Endothelial cell of umbilical vein (primary cell): ENCODE measurements at regions of chr7 and their contacts with region 1.

Region 1: DNA sequence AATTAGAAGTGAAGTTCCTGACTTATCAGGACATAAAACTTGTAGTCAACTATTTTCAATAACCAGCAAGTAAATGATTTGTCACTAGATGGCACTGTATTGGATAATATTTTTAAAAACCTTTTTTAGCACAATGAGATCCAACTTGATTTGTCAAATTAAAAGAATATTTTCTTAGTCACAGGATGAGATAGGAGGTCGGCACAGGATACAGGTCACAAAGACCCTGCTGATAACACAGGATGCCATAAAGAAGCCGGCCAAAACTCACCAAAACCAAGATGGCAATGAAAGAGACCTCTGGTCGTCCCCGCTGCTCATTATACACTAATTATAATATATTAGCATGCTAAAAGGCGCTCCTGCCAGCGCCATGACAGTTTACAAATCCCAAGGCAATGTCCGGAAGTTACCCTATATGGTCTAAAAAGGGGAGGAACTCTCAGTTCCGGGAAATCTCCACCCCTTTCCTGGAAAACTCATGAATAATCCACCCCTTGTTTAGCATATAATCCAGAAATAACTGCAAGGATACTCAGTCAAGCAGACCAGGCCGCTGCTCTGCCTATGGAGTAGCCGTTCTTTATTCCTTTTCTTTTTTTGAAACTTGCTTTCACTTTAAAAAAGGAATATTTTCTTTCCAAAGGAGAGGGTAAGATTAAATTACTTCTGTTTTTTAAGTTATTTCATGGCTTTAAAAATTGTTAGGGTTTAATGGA is 255.7 kb upstream of the MKLN1 start:
- DNase-seq: peak; percentile 96
- H3K4me3 ChIP-seq: peak overlapping the region in 1 of 3 experiments; percentile 51
- H3K27ac ChIP-seq: peak overlapping the region; percentile 88
- H3K4me1 ChIP-seq: peaks cover 17% of the 10 kb centered on the region
- H3K27me3 ChIP-seq: no peaks in the 10 kb centered on the region
- CTCF ChIP-seq: peak; percentile 11 to 16
- POLR2A ChIP-seq: no peak

Region 2: DNA sequence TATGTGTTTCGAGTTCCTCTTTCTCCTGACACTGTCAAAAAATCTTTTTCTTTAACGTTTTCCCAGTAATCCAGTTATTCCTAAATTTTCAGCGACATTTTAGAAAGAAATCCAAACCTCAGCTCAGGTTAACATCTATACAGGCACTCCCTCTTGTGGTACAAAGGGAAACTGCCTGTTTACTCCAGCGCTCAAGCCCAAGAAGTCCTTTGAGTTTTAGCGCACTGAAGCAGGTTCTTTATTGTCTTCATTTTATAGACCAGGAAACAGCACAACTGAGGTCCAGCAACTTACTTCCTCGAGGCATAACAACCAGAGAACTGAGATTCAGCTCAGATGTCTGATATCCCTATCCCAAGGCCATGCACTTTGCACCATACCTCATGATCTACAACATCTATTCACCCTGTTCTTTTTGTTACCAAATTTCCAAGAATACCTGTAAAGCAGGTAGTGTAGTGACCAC is 31.4 kb before region 1 on chr7:
- CTCF ChIA-PET with region 1: interaction called, 10 read pairs
- POLR2A ChIA-PET with region 1: no interaction called
- dilution Hi-C with region 1: no loop called
- intact Hi-C with region 1: no loop called
- DNase-seq: peak; percentile 82
- H3K4me3 ChIP-seq: no peak overlapping the region
- H3K27ac ChIP-seq: no peak overlapping the region
- H3K4me1 ChIP-seq: peaks cover 9% of the 10 kb centered on the region
- H3K27me3 ChIP-seq: no peaks in the 10 kb centered on the region
- CTCF ChIP-seq: peak; percentile 81 to 83
- POLR2A ChIP-seq: no peak

Region 3: DNA sequence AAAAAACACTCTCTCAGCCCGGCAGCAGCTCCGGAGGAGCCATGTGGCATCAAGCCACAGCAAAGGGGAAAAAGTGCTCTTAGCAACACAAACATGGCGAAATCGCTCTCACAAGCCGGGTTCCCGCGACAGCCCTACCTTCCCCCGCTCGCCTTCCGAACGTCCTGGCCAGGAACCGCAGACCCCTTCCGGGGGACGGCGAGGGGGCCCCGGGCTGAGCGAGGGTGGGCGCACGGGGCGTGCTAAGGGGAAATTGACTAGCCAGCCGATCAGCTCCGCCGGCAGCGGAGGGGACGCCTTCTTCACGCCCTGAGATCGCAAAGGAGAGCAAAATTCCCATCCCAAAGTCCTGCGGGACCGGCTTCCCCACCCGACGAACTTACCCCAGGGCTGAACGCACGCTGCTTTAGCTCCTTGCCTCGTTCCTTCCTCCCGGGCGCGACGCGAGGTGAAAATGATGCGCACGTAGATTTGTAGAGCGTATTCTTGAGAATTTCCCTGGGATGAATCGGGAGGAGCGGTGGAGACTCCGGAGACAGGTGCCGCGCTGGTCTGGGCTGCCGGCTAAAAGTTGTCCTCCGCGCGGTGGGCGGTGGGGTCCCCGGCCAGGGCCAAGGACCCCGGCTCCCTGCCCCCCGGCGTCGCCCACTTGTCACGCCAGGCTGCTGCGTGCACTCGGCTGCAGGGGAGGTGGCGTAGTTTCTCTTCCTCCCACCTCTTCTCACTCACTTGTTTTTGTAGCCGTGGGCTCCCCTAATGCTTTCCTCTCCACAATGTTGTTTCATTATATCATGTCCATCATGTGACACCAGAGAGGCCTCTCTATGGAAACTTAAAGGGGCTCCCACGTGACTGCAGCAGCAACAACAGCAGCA is 35.6 kb after region 1 on chr7:
- CTCF ChIA-PET with region 1: interaction called, 10 read pairs
- POLR2A ChIA-PET with region 1: interaction called, 6 read pairs
- dilution Hi-C with region 1: no loop called
- intact Hi-C with region 1: loop called (anchors 1 kb)
- DNase-seq: peak; percentile 92
- H3K4me3 ChIP-seq: peak overlapping the region; percentile 61 to 79 (median 63)
- H3K27ac ChIP-seq: peak overlapping the region; percentile 98
- H3K4me1 ChIP-seq: peaks cover 41% of the 10 kb centered on the region
- H3K27me3 ChIP-seq: no peaks in the 10 kb centered on the region
- CTCF ChIP-seq: no peak
- POLR2A ChIP-seq: no peak

Region 4: GRCh38 chr7:131244259-131244852 is 172.4 kb after region 1 on chr7:
- CTCF ChIA-PET with region 1: no interaction called
- POLR2A ChIA-PET with region 1: no interaction called
- dilution Hi-C with region 1: no loop called
- intact Hi-C with region 1: loop called (anchors 2 kb)
- DNase-seq: peak; percentile 73
- H3K4me3 ChIP-seq: no peak overlapping the region
- H3K27ac ChIP-seq: no peak overlapping the region
- H3K4me1 ChIP-seq: peaks cover 8% of the 10 kb centered on the region
- H3K27me3 ChIP-seq: no peaks in the 10 kb centered on the region
- CTCF ChIP-seq: no peak
- POLR2A ChIP-seq: no peak

Region 5: GRCh38 chr7:131327626-131328376 is 255.9 kb after region 1 on chr7 and contains the start of gene MKLN1:
- CTCF ChIA-PET with region 1: interaction called, 3 read pairs
- POLR2A ChIA-PET with region 1: no interaction called
- dilution Hi-C with region 1: no loop called
- intact Hi-C with region 1: loop called (anchors 2 kb)
- DNase-seq: peak; percentile 90
- H3K4me3 ChIP-seq: peak within 1 kb of the TSS; percentile 69 to 99 (median 87)
- H3K27ac ChIP-seq: peak within 1 kb of the TSS; percentile 98
- H3K4me1 ChIP-seq: peaks cover 17% of the 10 kb centered on the region
- H3K27me3 ChIP-seq: no peaks in the 10 kb centered on the region
- CTCF ChIP-seq: no peak
- POLR2A ChIP-seq: peak; percentile 81
- total RNA-seq, gene MKLN1: 31.7 and 32.1 TPM in 2 replicates

Region 6: GRCh38 chr7:131480384-131481315 is 408.7 kb after region 1 on chr7:
- CTCF ChIA-PET with region 1: no interaction called
- POLR2A ChIA-PET with region 1: no interaction called
- dilution Hi-C with region 1: no loop called
- intact Hi-C with region 1: loop called (anchors 2 kb)
- DNase-seq: peak; percentile 85
- H3K4me3 ChIP-seq: peak overlapping the region in 1 of 3 experiments; percentile 31
- H3K27ac ChIP-seq: peak overlapping the region; percentile 76
- H3K4me1 ChIP-seq: peaks cover 29% of the 10 kb centered on the region
- H3K27me3 ChIP-seq: no peaks in the 10 kb centered on the region
- CTCF ChIP-seq: no peak
- POLR2A ChIP-seq: no peak

Region 7: GRCh38 chr7:131654668-131655326 is 582.9 kb after region 1 on chr7:
- CTCF ChIA-PET with region 1: no interaction called
- POLR2A ChIA-PET with region 1: no interaction called
- dilution Hi-C with region 1: no loop called
- intact Hi-C with region 1: loop called (anchors 1 kb)
- DNase-seq: peak; percentile 75
- H3K4me3 ChIP-seq: no peak overlapping the region
- H3K27ac ChIP-seq: no peak overlapping the region
- H3K4me1 ChIP-seq: peaks cover 20% of the 10 kb centered on the region
- H3K27me3 ChIP-seq: no peaks in the 10 kb centered on the region
- CTCF ChIP-seq: peak; percentile 92 to 97
- POLR2A ChIP-seq: no peak